ENCODE measurements at regions of chr1 and their contacts with region 1.

Region 1: GRCh38 chr1:54950369-54951163 is 29.9 kb upstream of the TMEM61 start:
- DNase-seq: peak; percentile 74
- ATAC-seq: peak; percentile 83 to 88

Region 2: DNA sequence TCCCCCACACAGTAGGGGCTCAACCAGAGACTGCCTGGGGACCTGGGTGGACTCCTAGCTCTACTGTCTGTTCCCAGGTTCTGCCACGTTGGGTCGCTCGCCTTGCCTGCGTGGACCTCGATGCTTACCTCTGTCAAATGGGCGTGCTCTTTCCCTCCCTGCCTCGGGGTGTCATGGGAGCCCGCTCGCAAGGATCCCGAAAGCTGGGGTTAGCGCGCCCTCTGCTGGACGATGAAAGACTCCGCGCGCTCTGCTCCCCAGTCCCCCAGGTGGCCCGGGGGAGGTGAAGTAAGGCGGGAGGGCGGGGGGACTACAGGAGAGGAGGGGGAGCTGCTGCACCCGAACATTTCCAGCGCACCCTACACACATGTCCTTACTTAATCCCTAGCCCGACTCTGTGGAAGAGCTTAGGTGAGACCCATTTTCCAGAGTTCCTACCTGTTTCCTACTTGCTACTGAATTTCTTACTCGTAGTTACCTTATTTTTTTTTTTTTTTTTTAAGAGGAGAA is 45.8 kb after region 1 on chr1:
- intact Hi-C with region 1: loop called (anchors 2 to 5 kb)
- DNase-seq: peak; percentile 78
- ATAC-seq: peak; percentile 81 to 85

Region 3: GRCh38 chr1:55021965-55022546 is 71.5 kb after region 1 on chr1:
- intact Hi-C with region 1: loop called in 1 of 2 experiments (anchors 2 kb)
- DNase-seq: peak; percentile 80
- ATAC-seq: peak; percentile 98 to 100

Measured in left cardiac atrium (tissue), 4 donors.